Panc1 (cell line): ENCODE measurements at regions of chr6 and their contacts with region 1.

Region 1: DNA sequence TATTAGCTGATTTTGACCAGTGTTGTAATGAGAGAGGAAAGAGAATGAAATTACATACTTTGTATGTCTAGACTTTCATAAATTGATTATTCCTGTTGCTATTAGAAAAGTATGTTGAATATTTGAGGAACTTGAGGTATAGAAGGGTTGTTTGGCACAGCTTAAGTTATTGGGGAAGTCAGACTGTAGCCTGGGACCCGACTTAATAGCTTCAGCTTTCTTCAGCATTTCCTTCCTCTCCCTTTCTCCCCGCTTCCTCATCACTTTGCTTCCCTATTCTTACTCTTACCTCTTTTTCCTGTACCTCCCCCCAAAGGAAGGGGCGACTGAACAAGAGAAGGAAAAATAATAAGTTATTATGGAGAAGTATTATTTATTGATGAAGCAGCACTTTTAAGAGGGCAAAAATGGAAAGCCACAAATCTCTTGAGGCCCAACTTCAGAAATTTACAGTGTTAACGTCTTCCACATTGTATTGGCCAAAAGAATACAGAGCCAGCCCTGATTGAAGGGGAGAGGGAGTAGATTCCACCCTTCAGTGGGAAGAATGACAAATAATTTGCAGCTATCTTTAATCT is 7.4 kb downstream of the SENP6 start:
- DNase-seq: no peak
- ATAC-seq: no peak
- H3K4me3 ChIP-seq: no peak overlapping the region
- H3K27ac ChIP-seq: no peak overlapping the region
- H3K4me1 ChIP-seq: peaks cover 26% of the 10 kb centered on the region; the same call in 1 of the 2 replicates
- H3K27me3 ChIP-seq: no peaks in the 10 kb centered on the region
- CTCF ChIP-seq: no peak

Region 2: GRCh38 chr6:75656479-75656878 is 47.4 kb after region 1 on chr6:
- CTCF ChIA-PET with region 1: no interaction called
- POLR2A ChIA-PET with region 1: interaction called, 15 read pairs
- in situ Hi-C with region 1: no loop called
- intact Hi-C with region 1: no loop called
- DNase-seq: no peak
- ATAC-seq: no peak
- H3K4me3 ChIP-seq: no peak overlapping the region
- H3K27ac ChIP-seq: no peak overlapping the region
- H3K4me1 ChIP-seq: no peaks in the 10 kb centered on the region
- H3K27me3 ChIP-seq: no peaks in the 10 kb centered on the region
- CTCF ChIP-seq: no peak